ENCODE measurements at regions of chr11 and their contacts with region 1.

Region 1: GRCh38 chr11:78564490-78565467 is 9.9 kb downstream of the NARS2 start:
- DNase-seq: peak; percentile 62
- ATAC-seq: peak; percentile 67
- H3K4me3 Mint-ChIP-seq: no peak overlapping the region
- H3K27ac Mint-ChIP-seq: peak overlapping the region; percentile 17
- H3K4me1 Mint-ChIP-seq: peaks cover 29% of the 10 kb centered on the region
- H3K27me3 Mint-ChIP-seq: no peaks in the 10 kb centered on the region
- CTCF ChIP-seq: peak; percentile 67

Region 2: GRCh38 chr11:78149646-78150045 is 415.1 kb before region 1 on chr11:
- CTCF ChIA-PET with region 1: interaction called, 14 read pairs
- POLR2A ChIA-PET with region 1: no interaction called
- intact Hi-C with region 1: no loop called
- DNase-seq: peak; percentile 24
- ATAC-seq: no peak
- H3K4me3 Mint-ChIP-seq: no peak overlapping the region
- H3K27ac Mint-ChIP-seq: no peak overlapping the region
- H3K4me1 Mint-ChIP-seq: no peaks in the 10 kb centered on the region
- H3K27me3 Mint-ChIP-seq: no peaks in the 10 kb centered on the region
- CTCF ChIP-seq: no peak

Region 3: GRCh38 chr11:78228467-78228866 is 336.3 kb before region 1 on chr11:
- CTCF ChIA-PET with region 1: interaction called, 19 read pairs
- POLR2A ChIA-PET with region 1: no interaction called
- intact Hi-C with region 1: loop called (anchors 10 kb)
- DNase-seq: peak; percentile 28
- ATAC-seq: no peak
- H3K4me3 Mint-ChIP-seq: no peak overlapping the region
- H3K27ac Mint-ChIP-seq: no peak overlapping the region
- H3K4me1 Mint-ChIP-seq: peaks cover 8% of the 10 kb centered on the region
- H3K27me3 Mint-ChIP-seq: no peaks in the 10 kb centered on the region
- CTCF ChIP-seq: peak; percentile 53

Region 4: DNA sequence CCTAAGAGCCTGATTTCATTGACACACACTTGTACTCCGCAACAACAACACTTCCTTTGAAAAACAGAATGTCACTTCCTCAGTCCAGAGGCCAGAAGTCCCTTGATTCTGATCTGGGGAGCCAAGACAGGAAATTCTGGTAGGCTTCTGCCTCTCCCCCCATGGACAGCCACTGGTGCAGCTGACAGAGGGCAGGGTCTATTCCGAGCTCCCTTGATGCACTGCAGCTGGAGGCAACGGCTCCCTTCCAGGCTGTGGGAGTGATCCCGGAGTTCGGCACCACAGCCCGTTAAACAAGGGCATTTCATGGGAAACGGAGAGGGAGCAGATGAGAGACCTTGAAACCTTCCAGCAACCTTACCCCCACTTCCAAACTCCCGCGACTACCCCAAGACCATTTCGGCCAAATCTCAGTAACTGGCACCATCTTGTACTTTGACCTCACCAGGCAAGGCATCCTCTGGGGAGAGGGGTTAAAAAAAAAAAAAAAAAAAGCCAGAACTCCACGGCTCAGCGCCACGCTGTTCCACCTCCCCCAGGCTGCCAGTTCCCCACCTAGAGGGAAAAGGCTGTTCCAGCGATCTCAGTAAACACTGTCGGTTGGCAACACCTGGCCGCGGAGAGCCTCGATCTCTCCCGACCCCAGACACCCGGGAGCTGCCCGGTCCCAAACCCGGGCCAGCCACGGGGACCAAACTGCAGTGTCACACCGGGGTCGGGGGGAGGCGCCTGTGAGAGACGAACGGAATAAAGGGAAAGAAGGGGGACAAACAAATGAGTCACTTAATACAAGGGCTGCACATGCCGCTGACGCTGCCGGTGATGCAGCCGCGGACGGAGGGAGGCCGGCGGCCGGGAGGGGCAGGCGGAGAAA is 148.2 kb before region 1 on chr11:
- CTCF ChIA-PET with region 1: interaction called, 94 read pairs
- POLR2A ChIA-PET with region 1: interaction called, 8 read pairs
- intact Hi-C with region 1: loop called (anchors 2 kb)
- DNase-seq: peak; percentile 86
- ATAC-seq: peak; percentile 76
- H3K4me3 Mint-ChIP-seq: peak overlapping the region; percentile 71
- H3K27ac Mint-ChIP-seq: peak overlapping the region; percentile 37
- H3K4me1 Mint-ChIP-seq: peaks cover 26% of the 10 kb centered on the region
- H3K27me3 Mint-ChIP-seq: peaks cover 29% of the 10 kb centered on the region
- CTCF ChIP-seq: peak; percentile 69

Region 5: GRCh38 chr11:78432058-78432515 is 132.7 kb before region 1 on chr11:
- CTCF ChIA-PET with region 1: interaction called, 22 read pairs
- POLR2A ChIA-PET with region 1: no interaction called
- intact Hi-C with region 1: no loop called
- DNase-seq: peak; percentile 17
- ATAC-seq: no peak
- H3K4me3 Mint-ChIP-seq: no peak overlapping the region
- H3K27ac Mint-ChIP-seq: no peak overlapping the region
- H3K4me1 Mint-ChIP-seq: peaks cover 10% of the 10 kb centered on the region
- H3K27me3 Mint-ChIP-seq: no peaks in the 10 kb centered on the region
- CTCF ChIP-seq: peak; percentile 54

Region 6: DNA sequence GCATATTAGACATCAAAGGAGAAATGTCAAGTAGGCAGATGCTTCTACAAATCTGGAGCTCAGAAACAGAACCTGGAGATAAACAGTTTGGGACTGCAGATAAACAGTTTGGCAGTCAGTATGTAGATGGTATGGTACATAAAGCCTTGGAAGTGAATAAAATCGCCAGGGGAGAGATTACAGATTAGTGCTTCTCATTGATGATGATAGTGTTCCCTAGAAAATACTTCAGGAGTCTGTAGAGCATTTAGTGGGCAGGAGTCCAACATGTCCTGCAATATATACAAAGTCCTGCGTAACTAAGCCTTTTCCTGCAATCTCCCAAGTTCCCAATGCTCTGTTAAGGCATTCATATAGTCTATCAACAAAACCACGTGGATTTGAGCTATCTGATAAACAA is 25.3 kb before region 1 on chr11:
- CTCF ChIA-PET with region 1: interaction called, 17 read pairs
- POLR2A ChIA-PET with region 1: no interaction called
- intact Hi-C with region 1: no loop called
- DNase-seq: no peak
- ATAC-seq: no peak
- H3K4me3 Mint-ChIP-seq: no peak overlapping the region
- H3K27ac Mint-ChIP-seq: no peak overlapping the region
- H3K4me1 Mint-ChIP-seq: peaks cover 6% of the 10 kb centered on the region
- H3K27me3 Mint-ChIP-seq: no peaks in the 10 kb centered on the region
- CTCF ChIP-seq: no peak

Region 7: DNA sequence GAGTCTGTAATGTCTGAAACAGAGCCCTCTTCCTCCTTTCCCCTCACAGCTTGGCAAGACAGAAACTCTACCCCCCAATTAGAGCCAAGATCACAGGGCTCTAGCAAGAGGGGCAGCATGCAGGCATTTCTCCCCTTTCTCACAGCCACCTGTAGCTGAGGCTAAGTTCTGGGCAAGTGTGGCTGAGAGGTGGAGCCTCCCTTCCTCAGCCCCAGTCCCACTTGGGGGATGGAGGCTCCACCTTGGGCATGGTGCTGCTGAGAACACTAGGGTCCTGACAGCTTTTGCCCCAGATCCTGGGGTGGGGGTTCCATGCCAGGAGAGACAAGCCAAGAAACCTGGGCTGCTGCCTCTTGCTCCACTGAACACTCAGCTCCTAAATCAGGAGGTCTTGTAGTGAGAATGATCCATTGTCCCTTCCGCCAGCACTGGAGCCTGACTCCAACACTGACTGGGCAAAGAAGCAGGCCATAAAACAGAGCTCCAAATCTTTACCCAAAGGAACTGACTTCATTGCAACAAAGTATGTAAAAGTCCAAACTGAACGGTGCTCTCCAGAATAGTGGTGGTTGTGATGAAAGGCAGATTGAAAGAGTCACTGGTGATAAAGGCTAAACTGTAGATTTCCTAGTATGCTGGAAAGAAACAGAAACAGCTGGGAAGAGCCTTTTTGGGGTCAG is 15.7 kb before region 1 on chr11:
- CTCF ChIA-PET with region 1: interaction called, 32 read pairs
- POLR2A ChIA-PET with region 1: interaction called, 3 read pairs
- intact Hi-C with region 1: no loop called
- DNase-seq: no peak
- ATAC-seq: no peak
- H3K4me3 Mint-ChIP-seq: no peak overlapping the region
- H3K27ac Mint-ChIP-seq: no peak overlapping the region
- H3K4me1 Mint-ChIP-seq: peaks cover 11% of the 10 kb centered on the region
- H3K27me3 Mint-ChIP-seq: no peaks in the 10 kb centered on the region
- CTCF ChIP-seq: no peak

Measured in activated CD8-positive, alpha-beta T cell treated with anti-CD3 and anti-CD28 coated beads for 36 hours (primary cell).